Left ventricle myocardium superior (tissue), 1 donor: ENCODE measurements at regions of chr12 and their contacts with region 1.

Region 1: GRCh38 chr12:80745851-80746505 is 29.3 kb downstream of the MYF5 start:
- DNase-seq: no peak
- ATAC-seq: no peak

Region 2: DNA sequence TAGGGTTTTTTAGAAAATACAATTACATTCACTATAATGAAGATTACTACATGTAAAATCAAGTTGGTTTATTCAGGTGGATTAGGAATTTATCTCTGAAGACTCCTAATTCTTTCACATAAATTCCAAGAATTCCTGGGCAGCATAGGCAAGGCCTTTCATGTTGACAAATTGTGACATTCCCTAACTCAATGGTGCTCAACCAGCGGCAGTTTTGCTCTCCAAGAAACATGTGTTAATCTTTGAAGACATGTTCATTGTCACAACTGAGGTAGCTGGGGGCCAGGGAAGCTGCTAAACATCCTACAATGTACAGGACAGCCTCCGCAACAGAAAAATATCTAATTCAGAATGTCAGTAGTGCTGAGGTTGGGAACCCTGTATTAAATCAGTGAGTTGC is 255.6 kb before region 1 on chr12:
- intact Hi-C with region 1: loop called (anchors 10 kb)
- DNase-seq: no peak
- ATAC-seq: no peak

Region 3: DNA sequence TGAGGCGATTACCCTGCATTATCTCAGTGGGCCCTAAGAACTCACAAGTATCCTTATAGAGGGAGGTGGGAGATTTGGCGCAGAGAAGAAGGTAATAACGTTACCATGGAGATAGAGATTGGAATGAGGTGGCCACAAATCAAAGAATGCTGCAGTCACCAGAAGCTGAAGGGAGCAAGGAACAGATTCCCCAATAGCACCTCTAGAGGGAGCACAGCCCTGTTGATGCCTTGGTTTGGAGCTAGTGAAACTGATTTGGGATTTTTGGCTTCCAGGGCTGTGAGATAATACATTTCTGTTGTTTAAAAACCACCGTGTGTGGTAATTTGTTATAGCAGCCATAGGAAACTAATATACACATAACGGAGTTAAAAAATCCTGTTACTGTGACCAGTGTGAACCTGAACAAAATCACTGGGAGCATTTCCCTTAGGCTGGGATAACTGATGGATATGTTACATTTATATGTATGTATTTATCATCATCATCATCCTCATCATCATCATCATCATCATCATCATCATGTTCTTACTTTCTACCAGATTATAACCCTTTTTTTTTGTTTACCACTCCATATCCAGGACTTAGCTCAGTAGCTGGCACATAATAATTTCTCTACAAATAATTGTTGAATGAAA is 91.5 kb after region 1 on chr12:
- intact Hi-C with region 1: no loop called
- DNase-seq: no peak
- ATAC-seq: peak; percentile 91

Region 4: DNA sequence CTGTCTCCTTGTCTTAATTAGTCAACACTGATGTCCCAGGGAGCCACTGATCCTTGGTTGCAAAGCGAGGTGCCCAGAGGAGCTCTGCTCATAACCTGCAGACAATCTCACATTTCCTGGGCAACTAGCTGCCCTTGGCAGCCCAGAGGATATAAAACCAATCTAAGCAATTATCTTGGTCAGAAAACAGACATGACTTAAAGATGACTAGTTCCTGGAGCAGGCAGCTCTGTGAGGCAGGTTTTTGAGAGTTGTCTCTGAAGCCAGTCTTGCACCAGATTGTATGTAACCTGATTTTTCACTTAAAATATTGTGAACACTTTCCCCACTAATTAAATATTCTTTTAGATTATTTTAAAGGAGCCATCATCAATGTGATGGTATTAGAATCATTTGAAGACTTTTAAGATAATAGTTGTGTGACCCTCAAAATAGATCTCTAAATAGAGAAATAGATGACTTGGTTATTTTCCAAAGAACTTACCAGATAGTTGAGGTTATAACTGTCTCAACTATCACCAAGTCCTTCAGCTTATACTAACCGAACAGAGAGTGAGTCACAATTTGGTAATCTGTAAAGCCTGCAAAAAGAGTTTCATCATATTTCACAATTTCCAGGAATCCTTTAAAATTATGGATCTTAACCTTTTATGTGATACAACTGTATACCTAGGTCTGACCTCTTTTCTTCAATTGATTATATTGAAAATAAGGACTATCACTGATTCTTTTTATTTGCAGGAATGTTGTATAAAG is 115.8 kb after region 1 on chr12:
- intact Hi-C with region 1: no loop called
- DNase-seq: no peak
- ATAC-seq: no peak